ENCODE measurements at regions of chr6 and their contacts with region 1.

Region 1: GRCh38 chr6:46090115-46091079 is 39.4 kb upstream of the ENPP4 start:
- DNase-seq: peak; percentile 64
- CTCF ChIP-seq: peak; percentile 47

Region 2: DNA sequence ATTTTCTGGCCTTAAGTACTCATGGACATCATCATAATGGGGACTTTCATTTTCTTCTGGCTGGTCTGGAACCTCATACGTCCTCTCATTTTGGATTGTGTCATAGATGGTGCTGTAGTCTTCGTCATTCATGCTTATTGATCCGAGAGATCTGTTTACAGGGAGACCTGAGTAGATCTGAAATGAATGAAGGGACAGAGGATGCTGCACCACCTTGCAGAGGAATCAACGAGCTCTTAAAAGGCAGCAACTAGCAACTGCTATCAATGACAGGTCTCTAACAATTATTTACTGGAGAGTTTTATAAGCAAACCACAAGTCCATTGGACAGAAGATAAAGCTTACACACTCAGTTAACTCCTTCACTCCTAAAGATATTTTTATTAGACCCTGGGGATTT is 10.3 kb before region 1 on chr6:
- CTCF ChIA-PET with region 1: interaction called, 18 read pairs
- POLR2A ChIA-PET with region 1: no interaction called
- DNase-seq: no peak
- CTCF ChIP-seq: no peak

Region 3: GRCh38 chr6:46103440-46104115 is 13.2 kb after region 1 on chr6:
- CTCF ChIA-PET with region 1: interaction called, 21 read pairs
- POLR2A ChIA-PET with region 1: no interaction called
- DNase-seq: no peak
- CTCF ChIP-seq: no peak

Region 4: DNA sequence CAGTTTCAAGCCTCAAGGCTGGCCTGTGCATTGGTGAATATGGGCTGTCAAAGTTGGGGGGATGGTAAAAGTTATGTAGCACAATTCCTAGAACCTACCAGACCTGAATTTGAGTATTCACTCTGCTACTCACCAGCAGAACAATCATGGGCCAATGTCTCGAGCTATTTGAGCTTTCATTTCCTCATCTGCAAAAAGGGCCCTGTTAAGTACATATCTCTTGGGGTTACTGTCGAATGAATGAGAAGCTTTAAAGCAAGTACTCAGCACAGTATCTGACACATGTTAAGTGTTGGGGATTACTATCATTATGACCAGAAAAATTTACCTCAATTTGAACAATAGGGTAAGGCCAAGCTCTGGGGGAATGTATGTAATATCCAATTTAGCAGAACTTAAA is 25.9 kb after region 1 on chr6:
- CTCF ChIA-PET with region 1: interaction called, 16 read pairs
- POLR2A ChIA-PET with region 1: no interaction called
- DNase-seq: no peak
- CTCF ChIP-seq: no peak

Region 5: DNA sequence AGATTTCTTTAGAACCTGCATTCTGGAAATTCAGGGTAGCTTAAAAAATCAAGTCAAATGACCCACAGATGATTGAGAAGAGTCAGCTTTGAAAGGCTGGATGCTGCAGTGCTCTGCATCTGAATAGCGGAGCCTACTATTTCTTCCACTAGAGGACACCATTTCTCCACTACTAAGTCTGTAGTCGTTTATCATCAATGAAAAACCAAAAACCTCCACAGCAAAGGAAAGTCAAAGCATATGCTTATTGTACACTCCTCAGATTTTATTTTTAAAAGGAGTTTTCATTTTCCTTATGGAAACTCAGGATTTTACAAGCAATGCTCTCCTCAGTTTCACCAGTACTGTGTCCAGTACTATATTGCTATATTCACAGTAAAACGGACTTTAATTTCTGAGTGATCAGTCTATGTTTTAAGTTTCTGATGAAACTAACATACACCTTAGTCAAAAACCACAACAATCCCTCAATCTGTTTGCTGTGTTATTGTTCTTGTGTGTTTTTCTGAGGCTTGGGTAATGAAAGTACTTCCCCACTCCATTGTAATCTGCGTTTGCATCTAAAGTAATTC is 130.9 kb after region 1 on chr6:
- CTCF ChIA-PET with region 1: interaction called, 37 read pairs
- POLR2A ChIA-PET with region 1: interaction called, 3 read pairs
- DNase-seq: peak; percentile 44
- CTCF ChIP-seq: peak; percentile 71

Region 6: DNA sequence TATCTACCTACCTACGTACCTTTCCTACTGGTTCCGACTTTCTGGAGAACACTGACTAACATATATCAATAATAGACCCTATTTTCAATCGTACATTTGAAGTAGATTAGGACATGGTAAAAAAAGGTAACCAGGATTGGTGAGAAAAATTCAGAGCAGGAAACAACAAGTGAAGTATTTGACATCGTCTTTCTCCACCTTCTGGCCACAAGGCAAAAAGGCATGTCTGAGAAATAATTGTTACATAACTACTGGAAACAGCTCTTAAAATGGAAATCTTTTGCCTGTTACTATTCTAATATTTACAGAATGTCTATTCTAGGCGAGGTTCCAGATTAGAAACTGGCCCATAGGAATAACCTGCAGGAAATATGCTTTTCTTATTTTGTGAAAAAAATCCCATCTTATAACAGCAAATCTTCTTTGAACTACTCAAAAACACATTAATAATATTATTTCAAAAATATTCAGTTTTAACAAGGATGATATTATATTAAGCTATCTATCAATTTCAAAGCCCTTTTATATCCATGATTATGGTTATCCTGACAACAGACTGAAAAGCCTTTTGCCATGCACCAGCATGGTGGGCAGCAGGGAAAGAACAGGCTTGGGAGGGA is 320.0 kb after region 1 on chr6:
- CTCF ChIA-PET with region 1: interaction called, 65 read pairs
- POLR2A ChIA-PET with region 1: no interaction called
- DNase-seq: peak; percentile 50
- CTCF ChIP-seq: peak; percentile 68

Measured in GM10248 (cell line).